Panc1 (cell line): ENCODE measurements at regions of chr13 and their contacts with region 1.

Region 1: DNA sequence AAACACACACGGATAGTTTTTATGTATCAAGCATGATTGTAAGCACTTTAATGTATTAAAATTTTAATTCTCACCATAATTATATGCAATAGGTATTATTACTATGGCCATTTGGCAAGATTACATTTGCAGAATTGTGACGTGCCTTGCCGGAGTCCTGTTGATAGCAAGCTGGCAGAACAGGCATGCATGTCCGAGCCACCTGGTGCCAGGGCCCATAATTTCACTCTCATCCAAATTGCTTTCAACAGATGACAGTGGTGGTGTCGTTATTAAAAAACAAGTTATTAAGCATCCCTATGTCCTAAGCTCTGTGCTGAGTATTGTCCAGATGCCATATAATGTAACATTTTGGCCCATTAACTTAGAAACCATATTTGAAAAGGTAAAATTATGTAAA is 374.3 kb downstream of the FOXO1 start:
- DNase-seq: no peak
- ATAC-seq: no peak
- H3K4me3 ChIP-seq: no peak overlapping the region
- H3K27ac ChIP-seq: no peak overlapping the region
- H3K4me1 ChIP-seq: no peaks in the 10 kb centered on the region
- H3K27me3 ChIP-seq: no peaks in the 10 kb centered on the region
- CTCF ChIP-seq: no peak

Region 2: DNA sequence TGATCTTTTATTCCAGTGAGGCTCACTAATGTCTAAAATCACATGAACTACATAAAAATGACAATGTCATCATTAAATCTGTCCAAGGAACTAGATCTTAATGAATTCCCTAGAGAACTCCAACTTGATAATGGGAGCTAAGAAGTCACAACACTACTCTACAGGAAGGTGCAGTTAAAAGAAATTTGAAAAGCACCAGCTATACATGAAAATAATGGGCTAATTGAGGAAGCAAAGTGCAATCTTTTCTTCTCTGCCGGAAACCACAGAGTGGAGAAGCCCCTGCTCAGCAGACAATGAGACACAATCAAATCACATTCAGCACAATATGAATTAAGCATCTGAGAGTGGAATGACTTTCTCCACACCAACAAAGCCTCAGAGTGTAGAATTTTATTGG is 950.9 kb before region 1 on chr13:
- CTCF ChIA-PET with region 1: interaction called, 11 read pairs
- POLR2A ChIA-PET with region 1: no interaction called
- in situ Hi-C with region 1: no loop called
- intact Hi-C with region 1: no loop called
- DNase-seq: no peak
- ATAC-seq: no peak
- H3K4me3 ChIP-seq: no peak overlapping the region
- H3K27ac ChIP-seq: no peak overlapping the region
- H3K4me1 ChIP-seq: no peaks in the 10 kb centered on the region
- H3K27me3 ChIP-seq: no peaks in the 10 kb centered on the region
- CTCF ChIP-seq: no peak

Region 3: GRCh38 chr13:40149611-40150274 is 142.4 kb before region 1 on chr13:
- CTCF ChIA-PET with region 1: no interaction called
- POLR2A ChIA-PET with region 1: no interaction called
- in situ Hi-C with region 1: no loop called
- intact Hi-C with region 1: no loop called
- DNase-seq: no peak
- ATAC-seq: no peak
- H3K4me3 ChIP-seq: no peak overlapping the region
- H3K27ac ChIP-seq: no peak overlapping the region
- H3K4me1 ChIP-seq: no peaks in the 10 kb centered on the region
- H3K27me3 ChIP-seq: no peaks in the 10 kb centered on the region
- CTCF ChIP-seq: no peak